Posterior vena cava (tissue), 2 donors: ENCODE measurements at regions of chr3 and their contacts with region 1.

Region 1: GRCh38 chr3:45776611-45777010 is 19.7 kb downstream of the SLC6A20 start:
- DNase-seq: no peak

Region 2: DNA sequence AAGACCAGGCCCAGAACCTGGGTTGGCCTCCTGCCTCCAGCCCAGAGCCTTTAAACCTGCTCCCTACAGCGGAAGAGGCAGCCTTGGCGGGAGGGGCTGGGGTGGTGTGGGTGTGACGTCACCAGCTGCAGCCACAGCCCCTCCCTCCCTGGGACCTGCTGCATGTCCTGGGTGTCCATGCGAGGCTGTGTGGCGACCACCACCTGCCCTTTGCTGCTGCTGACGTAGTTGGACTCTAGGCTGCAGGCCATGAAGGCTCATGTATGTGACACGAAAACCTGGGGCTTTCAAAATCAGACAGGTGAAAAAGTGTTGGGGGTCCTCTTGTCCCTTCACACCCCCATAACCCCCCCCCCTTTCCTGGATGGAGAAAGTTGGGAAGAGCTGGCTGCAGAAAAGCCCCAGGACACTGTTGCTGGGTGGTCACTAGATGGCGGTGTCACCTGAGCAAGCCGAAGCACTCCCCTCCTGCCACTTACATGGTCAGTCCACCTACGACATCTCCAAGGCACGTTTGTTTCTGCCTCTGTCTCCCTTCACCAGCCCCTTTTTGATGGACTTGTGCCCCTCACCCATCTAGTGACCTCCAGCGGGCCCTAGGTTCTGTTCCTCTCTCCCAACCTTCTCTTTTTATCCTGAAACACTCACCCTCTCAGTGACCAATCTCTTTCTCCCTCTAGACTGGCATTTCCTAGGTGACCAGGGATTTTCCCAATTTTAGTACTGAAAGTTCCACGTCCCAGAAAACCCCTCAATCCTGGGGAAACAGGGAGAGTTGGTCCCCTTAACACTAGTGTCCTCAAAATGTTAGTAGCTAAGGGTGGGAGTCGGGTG is 15.5 kb before region 1 on chr3:
- intact Hi-C with region 1: no loop called
- DNase-seq: no peak

Region 3: DNA sequence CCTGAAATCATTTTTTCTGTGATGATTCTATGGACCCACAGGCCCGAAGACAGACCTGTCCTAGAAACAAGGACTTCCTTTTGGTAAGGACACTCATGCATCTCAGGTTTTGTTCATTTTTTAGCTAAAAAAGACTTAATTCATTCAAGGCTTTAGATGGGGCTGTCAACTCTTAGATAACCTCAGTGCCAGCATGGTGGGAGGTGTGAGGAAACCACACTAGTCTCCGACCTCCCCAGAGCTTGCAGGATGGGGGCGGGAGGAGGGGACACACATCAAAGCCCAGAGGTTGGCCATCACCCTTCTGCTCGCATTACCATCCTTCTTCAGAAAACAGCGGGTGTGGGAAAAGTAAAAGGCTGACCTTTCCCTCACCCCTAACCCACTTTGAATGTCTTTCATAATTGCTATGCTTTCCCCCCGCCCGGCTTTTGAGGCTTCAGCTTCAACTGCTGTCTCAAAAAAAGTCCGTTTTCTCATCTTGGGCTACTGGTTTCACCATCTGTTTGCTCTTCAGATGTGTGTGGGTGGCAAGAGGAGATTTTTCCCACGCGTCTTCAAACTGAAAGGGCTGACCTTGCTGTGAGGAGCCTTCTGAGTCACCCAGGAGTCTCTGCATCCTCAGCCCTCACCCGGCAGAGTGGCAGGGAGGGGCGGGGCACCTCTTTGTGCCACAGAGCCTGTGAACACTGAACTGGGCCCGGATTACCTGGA is 139.1 kb after region 1 on chr3:
- intact Hi-C with region 1: loop called in 1 of 2 experiments (anchors 10 kb)
- DNase-seq: no peak

Region 4: DNA sequence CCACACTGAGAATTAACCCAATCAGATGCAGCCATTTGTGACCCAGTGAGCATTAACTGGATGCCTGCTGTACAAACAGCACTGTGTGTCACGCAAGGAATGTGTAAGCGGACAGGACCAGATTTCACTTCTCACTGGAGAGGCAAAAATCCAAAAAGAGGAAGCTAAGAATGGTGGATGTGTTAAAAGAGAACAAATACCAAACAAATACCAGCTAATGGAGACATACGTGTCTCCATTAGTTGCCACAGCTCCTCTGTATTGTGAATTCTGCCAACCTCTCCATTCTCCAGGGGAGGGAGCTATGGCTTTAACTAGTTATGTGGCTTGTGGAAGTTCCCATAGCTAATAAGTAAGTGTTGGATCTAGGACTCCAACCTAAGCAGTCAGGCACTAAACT is 685.5 kb after region 1 on chr3:
- intact Hi-C with region 1: no loop called
- DNase-seq: no peak